ENCODE measurements at regions of chr17 and their contacts with region 1.

Region 1: GRCh38 chr17:49899191-49899485 is 51.3 kb upstream of the TAC4 start:
- DNase-seq: peak; percentile 68 to 78
- ATAC-seq: peak; percentile 47 to 81; a peak in 4 of 6 replicates
- H3K4me3 ChIP-seq: no peak overlapping the region
- H3K27ac ChIP-seq: no peak overlapping the region
- H3K4me1 ChIP-seq: peaks cover 13% of the 10 kb centered on the region
- CTCF ChIP-seq: peak; percentile 52
- EP300 ChIP-seq: no peak
- POLR2A ChIP-seq: no peak
- RAD21 ChIP-seq: peak; percentile 60 to 73

Region 2: DNA sequence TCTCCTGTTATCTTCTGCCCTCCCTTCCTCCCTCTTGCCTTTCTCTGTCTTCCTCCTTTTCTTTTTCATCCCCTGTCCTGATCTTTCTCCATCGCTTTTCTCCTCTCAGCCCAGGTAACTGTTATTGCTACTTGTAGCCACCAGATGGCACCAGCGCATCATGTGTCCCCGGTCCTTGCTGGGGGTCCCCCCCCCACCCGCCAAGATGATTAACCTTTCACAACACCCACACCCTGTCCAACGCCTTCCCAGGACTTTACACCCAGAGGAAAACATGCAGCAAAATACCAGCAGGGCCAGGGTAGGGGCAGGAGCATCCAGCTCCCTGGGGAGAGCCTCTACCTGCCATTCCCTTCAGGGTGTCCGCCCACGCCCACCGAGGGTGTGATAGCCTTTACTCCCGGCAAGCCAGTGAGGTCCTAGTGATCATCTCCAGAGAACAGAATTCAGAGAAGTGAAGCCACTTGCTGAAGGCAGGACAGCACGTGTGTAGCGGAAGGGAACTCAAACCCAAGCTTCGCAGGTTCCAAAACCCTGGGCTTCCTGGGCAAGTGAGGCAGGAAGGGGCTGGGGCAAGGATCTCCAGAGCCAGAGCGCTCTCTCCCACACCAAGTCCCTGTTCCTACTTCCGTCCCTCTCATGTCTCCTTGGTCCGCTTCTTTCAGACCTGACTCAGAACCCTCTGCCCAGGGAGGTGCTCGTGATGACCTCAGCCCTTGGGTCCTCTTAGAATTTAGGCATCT is 37.8 kb before region 1 on chr17:
- CTCF ChIA-PET with region 1: interaction called, 25 read pairs
- POLR2A ChIA-PET with region 1: no interaction called
- DNase-seq: peak; percentile 66 to 82
- ATAC-seq: peak; percentile 42 to 65
- H3K4me3 ChIP-seq: no peak overlapping the region
- H3K27ac ChIP-seq: 0 out of 6 replicates have a peak overlapping the region, but pooled peaks of 1 of the 2 experiments have one; percentile 0
- H3K4me1 ChIP-seq: peaks cover 4% of the 10 kb centered on the region; the same call in 1 of the 3 replicates
- CTCF ChIP-seq: peak; percentile 98
- EP300 ChIP-seq: no peak
- POLR2A ChIP-seq: no peak
- RAD21 ChIP-seq: peak; percentile 99 to 100

Region 3: DNA sequence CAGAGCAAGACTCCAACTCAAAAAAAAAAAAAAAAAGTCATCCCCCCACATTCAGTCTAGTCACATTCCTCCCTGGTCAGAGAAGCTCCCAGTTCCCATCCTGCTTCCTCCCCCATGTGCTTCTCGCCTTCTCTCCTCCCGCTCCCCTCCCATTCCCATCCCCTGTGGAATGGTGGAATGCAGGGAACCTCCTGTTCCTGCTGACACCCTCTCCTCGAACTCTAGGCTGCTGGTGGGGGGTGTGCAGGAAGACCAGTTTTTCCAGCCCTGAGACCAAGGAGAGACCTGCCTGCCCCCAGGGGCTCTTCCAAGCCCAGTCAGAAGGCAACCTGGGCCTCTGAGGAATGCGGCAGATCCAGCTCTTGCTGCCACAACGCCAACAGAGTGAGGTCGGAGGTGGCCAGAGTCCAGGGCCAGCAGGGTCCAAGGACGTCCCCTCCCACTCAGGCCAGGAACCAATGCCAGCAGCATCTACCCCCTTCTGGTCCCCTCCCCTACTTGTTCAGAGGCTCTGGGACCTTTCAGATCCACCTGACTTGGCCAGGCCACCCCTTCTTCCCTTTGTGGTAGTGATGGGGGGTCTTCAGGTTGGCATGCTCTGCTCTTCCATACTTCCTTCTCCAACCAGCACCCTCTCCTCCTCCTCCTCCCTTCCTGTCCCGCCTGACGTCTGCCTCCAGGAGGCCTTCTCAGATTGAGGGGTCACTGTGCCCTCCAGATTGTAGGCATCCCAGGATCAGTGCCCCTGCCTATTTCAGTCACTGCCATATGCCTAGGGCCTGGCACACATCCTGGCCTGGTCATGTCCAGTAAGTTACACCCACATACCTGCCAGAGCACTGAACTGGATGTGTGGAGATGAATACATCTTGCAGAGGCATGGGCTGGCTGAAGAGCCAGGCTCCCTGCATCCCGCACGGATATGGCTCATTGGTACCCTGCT is 11.8 kb before region 1 on chr17:
- CTCF ChIA-PET with region 1: interaction called, 22 read pairs
- POLR2A ChIA-PET with region 1: no interaction called
- DNase-seq: no peak
- ATAC-seq: no peak
- H3K4me3 ChIP-seq: no peak overlapping the region
- H3K27ac ChIP-seq: no peak overlapping the region
- H3K4me1 ChIP-seq: no peaks in the 10 kb centered on the region
- CTCF ChIP-seq: no peak
- EP300 ChIP-seq: no peak
- POLR2A ChIP-seq: no peak
- RAD21 ChIP-seq: no peak

Region 4: GRCh38 chr17:49910094-49910857 is 11.1 kb after region 1 on chr17:
- CTCF ChIA-PET with region 1: interaction called, 37 read pairs
- POLR2A ChIA-PET with region 1: no interaction called
- DNase-seq: peak; percentile 39 to 55
- ATAC-seq: peak in 1 of 2 experiments; percentile 25; a peak in 2 of 6 replicates
- H3K4me3 ChIP-seq: peak overlapping the region; percentile 26; the same call in 2 of the 3 replicates
- H3K27ac ChIP-seq: peak overlapping the region in 1 of 2 experiments; percentile 63; a peak in 2 of 6 replicates
- H3K4me1 ChIP-seq: peaks cover 20% of the 10 kb centered on the region
- CTCF ChIP-seq: no peak
- EP300 ChIP-seq: no peak
- POLR2A ChIP-seq: no peak
- RAD21 ChIP-seq: no peak

Region 5: DNA sequence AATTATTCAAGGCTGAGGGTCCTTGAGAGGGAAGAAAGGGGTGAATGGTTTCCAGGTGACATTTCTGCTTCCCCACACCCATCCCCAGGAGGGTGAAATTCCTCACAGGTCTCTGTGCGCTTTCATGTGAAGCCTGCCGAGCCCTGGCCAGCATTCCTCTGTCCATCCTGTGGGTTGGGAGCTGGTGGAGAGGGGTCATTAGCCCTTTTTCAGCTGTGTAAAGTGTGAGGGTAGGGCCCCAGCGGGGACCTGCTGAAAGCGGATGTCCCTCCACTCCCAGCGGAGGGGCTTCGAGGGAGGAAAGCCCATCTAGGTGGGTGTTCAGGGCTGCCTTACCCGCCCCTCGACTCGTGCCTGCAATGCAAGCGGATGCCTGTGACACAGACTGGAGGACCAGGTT is 16.5 kb after region 1 on chr17:
- CTCF ChIA-PET with region 1: interaction called, 37 read pairs
- POLR2A ChIA-PET with region 1: no interaction called
- DNase-seq: no peak
- ATAC-seq: no peak
- H3K4me3 ChIP-seq: no peak overlapping the region
- H3K27ac ChIP-seq: no peak overlapping the region
- H3K4me1 ChIP-seq: peaks cover 20% of the 10 kb centered on the region
- CTCF ChIP-seq: no peak
- EP300 ChIP-seq: no peak
- POLR2A ChIP-seq: no peak
- RAD21 ChIP-seq: no peak